Heart right ventricle (tissue), 16 donors: ENCODE measurements at regions of chr9 and their contacts with region 1.

Region 1: GRCh38 chr9:121213136-121213806 is 11.6 kb upstream of the RAB14 start:
- DNase-seq: peak; percentile 91 to 93
- ATAC-seq: peak; percentile 88 to 97 (median 96)
- H3K4me3 ChIP-seq: no peak overlapping the region
- H3K27ac ChIP-seq: peak overlapping the region in 7 of 10 donors; percentile 8 to 82 (median 63)
- H3K4me1 ChIP-seq: peaks cover 0 to 18% (median 6%) of the 10 kb centered on the region in 9 donors
- H3K27me3 ChIP-seq: no peaks in the 10 kb centered on the region
- CTCF ChIP-seq: peak; percentile 90 to 98 (median 96)

Region 2: DNA sequence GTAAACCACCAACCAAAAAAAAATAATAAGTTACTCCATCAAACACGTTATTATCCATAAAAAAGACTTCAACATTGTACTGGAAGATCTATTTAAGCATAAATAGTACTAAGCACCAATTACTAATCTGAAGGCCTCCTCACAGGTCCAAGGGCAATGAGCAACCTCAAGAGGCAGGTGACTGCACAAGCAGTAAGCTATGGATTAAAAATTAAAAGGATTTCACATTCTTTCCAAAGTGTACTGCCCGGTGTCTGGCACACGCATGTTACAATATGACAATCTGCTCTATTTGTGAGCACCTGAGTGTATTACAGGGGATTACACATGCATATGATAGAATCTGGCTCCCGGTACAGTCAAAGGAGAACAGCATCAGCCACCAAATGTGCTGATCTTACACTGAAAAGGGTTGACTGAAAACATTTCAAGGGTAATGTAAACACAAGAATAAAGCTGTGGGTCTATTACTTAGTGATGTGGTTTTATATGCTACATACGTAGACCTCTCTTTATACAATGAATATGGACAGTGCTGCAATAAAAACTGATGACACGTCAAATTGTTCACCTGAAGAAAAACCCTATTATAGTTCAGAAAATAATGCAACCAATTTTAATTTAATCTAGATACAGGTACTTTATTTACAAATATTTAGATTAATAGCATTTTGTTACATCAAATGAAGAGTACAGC is 34.4 kb before region 1 on chr9:
- intact Hi-C with region 1: no loop called
- DNase-seq: no peak
- ATAC-seq: no peak
- H3K4me3 ChIP-seq: no peak overlapping the region
- H3K27ac ChIP-seq: no peak overlapping the region
- H3K4me1 ChIP-seq: peaks cover 0 to 37% (median 19%) of the 10 kb centered on the region in 9 donors
- H3K27me3 ChIP-seq: no peaks in the 10 kb centered on the region
- CTCF ChIP-seq: no peak

Region 3: GRCh38 chr9:121267689-121268597 is 54.7 kb after region 1 on chr9 and contains the start of gene GSN:
- intact Hi-C with region 1: loop called in 4 of 10 experiments (anchors 5 kb)
- DNase-seq: peak; percentile 86 to 89
- ATAC-seq: peak; percentile 83 to 94 (median 90)
- H3K4me3 ChIP-seq: peak within 1 kb of the TSS; percentile 79 to 95 (median 90)
- H3K27ac ChIP-seq: peak within 1 kb of the TSS; percentile 70 to 92 (median 88)
- H3K4me1 ChIP-seq: peaks cover 8 to 66% (median 57%) of the 10 kb centered on the region in 9 donors
- H3K27me3 ChIP-seq: no peaks in the 10 kb centered on the region
- CTCF ChIP-seq: peak in 3 of 9 donors; percentile 13 to 17 (median 16)
- total RNA-seq, gene GSN: 532 to 861 (median 668) TPM

Region 4: GRCh38 chr9:121299467-121300234 is 86.4 kb after region 1 on chr9:
- intact Hi-C with region 1: loop called in 1 of 10 experiments (anchors 5 kb)
- DNase-seq: peak; percentile 89 to 91
- ATAC-seq: peak; percentile 76 to 83 (median 79)
- H3K4me3 ChIP-seq: peak overlapping the region; percentile 56 to 81 (median 68)
- H3K27ac ChIP-seq: peak overlapping the region; percentile 82 to 100 (median 94)
- H3K4me1 ChIP-seq: peaks cover 38 to 96% (median 93%) of the 10 kb centered on the region in 9 donors
- H3K27me3 ChIP-seq: no peaks in the 10 kb centered on the region
- CTCF ChIP-seq: peak in 2 of 9 donors; percentile 10 to 22

Region 5: GRCh38 chr9:121321016-121321503 is 107.8 kb after region 1 on chr9:
- intact Hi-C with region 1: loop called in 4 of 10 experiments (anchors 2 to 10 kb)
- DNase-seq: no peak
- ATAC-seq: no peak
- H3K4me3 ChIP-seq: no peak overlapping the region
- H3K27ac ChIP-seq: peak overlapping the region in 9 of 10 donors; percentile 45 to 98 (median 78)
- H3K4me1 ChIP-seq: peaks cover 27 to 97% (median 58%) of the 10 kb centered on the region in 9 donors
- H3K27me3 ChIP-seq: no peaks in the 10 kb centered on the region
- CTCF ChIP-seq: no peak

Region 6: GRCh38 chr9:121376214-121376830 is 163.1 kb after region 1 on chr9:
- intact Hi-C with region 1: loop called in 5 of 10 experiments (anchors 1 to 5 kb)
- DNase-seq: no peak
- ATAC-seq: peak in 1 of 8 donors; percentile 42
- H3K4me3 ChIP-seq: no peak overlapping the region
- H3K27ac ChIP-seq: peak overlapping the region in 2 of 10 donors; percentile 97
- H3K4me1 ChIP-seq: peaks cover 3 to 48% (median 38%) of the 10 kb centered on the region in 9 donors
- H3K27me3 ChIP-seq: no peaks in the 10 kb centered on the region
- CTCF ChIP-seq: peak; percentile 11 to 74 (median 55)